Testis (tissue), 5 donors: ENCODE measurements at regions of chr3 and their contacts with region 1.

Region 1: DNA sequence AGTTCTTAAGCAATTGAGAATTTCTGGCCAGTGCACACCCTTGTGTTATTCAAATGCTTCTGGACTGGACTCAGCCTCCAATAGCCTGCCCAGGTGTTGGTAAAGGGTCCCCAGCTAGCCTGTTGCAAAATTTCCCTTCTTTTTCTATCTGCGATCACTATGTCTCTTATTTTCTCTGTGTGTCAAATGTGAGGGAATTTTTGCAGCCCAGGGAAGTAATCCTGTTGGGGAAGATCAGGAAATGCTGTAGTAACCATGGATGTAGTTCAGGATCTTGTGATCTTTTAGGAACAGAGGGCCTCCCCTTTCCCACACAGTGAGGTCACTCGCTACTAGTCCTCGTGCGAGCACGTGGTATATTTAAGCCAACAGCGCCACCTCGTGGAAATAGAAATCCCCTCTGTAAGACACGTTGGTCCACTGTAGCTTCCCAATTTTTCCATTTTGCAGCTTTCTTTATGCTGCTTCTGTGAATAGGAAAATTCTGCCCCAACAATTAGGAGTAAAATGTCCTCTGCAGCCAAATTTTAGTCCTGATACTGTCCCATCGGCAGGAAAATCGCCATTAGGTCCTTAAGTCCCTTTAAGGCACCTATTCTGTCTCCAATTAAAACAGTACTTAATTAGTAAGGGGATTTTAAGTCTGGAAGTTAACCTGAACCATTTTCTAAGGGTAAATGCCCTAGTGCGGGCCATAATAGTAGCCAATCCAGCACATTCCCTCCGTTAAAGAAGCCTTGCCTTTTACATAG is 4.0 kb upstream of the SMCO1 start:
- DNase-seq: peak; percentile 77
- H3K4me3 ChIP-seq: no peak overlapping the region
- H3K27ac ChIP-seq: no peak overlapping the region
- H3K4me1 ChIP-seq: no peaks in the 10 kb centered on the region
- H3K27me3 ChIP-seq: no peaks in the 10 kb centered on the region
- CTCF ChIP-seq: peak in 2 of 3 experiments; percentile 41 to 43
- POLR2A ChIP-seq: no peak

Region 2: DNA sequence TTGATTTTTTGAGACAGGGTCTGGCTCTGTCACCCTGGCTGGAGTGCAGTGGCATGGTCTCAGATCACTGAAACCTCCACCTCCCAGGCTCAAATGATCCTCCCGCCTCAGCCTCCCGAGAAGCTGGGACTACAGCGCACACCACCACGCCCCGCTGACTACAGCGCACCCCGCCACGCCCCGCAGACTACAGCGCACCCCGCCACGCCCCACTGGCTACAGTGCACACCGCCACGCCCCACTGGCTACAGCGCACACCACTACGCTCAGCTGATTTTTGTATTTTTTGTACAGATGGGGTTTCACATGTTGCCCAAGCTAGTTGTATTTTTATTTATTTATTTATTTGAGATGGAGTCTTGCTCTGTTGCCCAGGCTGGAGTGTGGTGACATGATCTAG is 267.2 kb before region 1 on chr3:
- intact Hi-C with region 1: loop called (anchors 10 kb)
- DNase-seq: no peak
- H3K4me3 ChIP-seq: no peak overlapping the region
- H3K27ac ChIP-seq: no peak overlapping the region
- H3K4me1 ChIP-seq: no peaks in the 10 kb centered on the region
- H3K27me3 ChIP-seq: no peaks in the 10 kb centered on the region
- CTCF ChIP-seq: no peak
- POLR2A ChIP-seq: no peak

Region 3: DNA sequence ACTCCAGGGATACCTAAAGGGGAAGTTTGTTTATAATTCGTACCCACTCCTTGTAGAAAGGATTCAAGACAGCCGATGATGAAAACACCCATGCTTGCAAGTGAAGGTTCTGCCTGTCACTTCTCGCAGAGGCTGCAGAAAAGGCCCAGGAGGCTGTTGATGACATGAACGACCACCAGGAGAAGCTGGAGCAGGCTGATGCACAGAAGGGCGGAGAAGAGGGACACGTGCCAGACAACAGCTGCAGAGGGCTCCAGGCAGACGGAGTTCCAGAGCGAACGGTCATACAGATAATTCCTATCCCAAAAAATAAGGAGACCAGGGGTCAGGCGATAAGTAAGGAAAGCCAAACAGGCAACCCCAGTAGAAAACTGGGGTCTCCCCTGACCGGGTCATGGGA is 195.4 kb before region 1 on chr3:
- intact Hi-C with region 1: no loop called
- DNase-seq: no peak
- H3K4me3 ChIP-seq: no peak overlapping the region
- H3K27ac ChIP-seq: no peak overlapping the region
- H3K4me1 ChIP-seq: peaks cover 10% of the 10 kb centered on the region
- H3K27me3 ChIP-seq: no peaks in the 10 kb centered on the region
- CTCF ChIP-seq: no peak
- POLR2A ChIP-seq: no peak

Region 4: GRCh38 chr3:196611761-196612483 is 92.8 kb after region 1 on chr3:
- intact Hi-C with region 1: no loop called
- DNase-seq: no peak
- H3K4me3 ChIP-seq: no peak overlapping the region
- H3K27ac ChIP-seq: no peak overlapping the region
- H3K4me1 ChIP-seq: peaks cover 10% of the 10 kb centered on the region
- H3K27me3 ChIP-seq: no peaks in the 10 kb centered on the region
- CTCF ChIP-seq: no peak
- POLR2A ChIP-seq: no peak